Gastrocnemius medialis (tissue), 4 donors: ENCODE measurements at regions of chr9 and their contacts with region 1.

Region 1: DNA sequence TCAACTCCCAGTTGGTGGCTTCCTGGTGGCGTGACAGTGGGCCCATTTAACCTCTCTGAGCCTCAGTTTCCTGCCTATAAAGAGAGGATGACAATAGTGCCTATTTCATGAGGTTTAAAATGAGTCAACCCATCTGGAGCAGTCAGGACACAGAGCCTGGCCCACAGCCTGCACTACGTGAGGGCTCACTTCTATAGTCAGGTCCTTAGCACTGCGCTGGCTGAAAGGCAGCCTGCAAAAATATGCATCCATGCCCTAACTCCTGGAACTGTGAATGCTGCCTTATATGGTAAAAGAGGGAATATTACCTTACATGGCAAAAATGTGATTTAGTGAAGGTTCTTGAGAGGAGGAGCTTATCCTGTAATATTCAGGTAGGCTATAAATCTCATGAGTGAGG is 98.6 kb downstream of the GABBR2 start:
- DNase-seq: no peak
- ATAC-seq: no peak
- H3K4me3 ChIP-seq: no peak overlapping the region
- H3K27ac ChIP-seq: no peak overlapping the region
- H3K4me1 ChIP-seq: no peaks in the 10 kb centered on the region
- H3K27me3 ChIP-seq: no peaks in the 10 kb centered on the region
- CTCF ChIP-seq: no peak
- POLR2A ChIP-seq: no peak

Region 2: DNA sequence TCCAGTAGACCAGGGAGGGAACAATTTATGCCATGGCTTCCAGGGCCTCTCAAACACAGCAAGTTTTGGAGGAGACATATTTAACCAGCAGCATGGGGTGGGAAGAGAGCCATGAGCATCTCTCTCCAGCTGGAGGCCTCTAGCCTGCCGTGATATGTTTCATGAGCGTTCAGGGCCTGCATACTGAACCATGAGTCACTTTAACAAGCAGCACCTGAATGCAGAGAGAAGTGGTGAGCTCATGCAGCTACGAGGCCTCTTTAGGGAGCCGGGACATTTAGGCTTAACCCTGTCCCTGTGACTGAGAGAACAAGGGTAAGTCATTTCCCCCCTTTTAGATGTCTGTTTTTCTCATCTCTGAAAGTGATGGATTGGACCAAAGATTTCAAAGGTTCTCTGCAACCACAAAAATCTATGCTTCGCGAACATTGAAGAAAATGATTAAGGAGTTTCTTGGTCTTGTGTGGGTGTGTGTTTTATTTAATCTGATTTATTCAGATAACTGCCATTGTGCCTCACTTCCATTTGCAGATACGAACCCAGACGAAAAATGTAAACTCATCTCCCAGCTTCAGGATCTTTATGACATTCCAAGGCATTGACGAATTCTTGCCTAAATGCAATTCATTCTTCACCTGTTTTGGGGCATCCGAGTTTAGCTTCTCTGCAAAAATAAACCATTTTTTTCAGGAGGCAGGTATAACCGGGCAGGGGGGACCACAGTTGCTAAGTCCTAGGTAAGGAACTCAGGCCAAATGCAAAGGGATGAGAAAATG is 58.5 kb before region 1 on chr9:
- in situ Hi-C with region 1: no loop called
- intact Hi-C with region 1: loop called (anchors 2 kb)
- DNase-seq: no peak
- ATAC-seq: no peak
- H3K4me3 ChIP-seq: no peak overlapping the region
- H3K27ac ChIP-seq: no peak overlapping the region
- H3K4me1 ChIP-seq: no peaks in the 10 kb centered on the region
- H3K27me3 ChIP-seq: no peaks in the 10 kb centered on the region
- CTCF ChIP-seq: no peak
- POLR2A ChIP-seq: no peak